ENCODE measurements at regions of chr15 and their contacts with region 1.

Region 1: GRCh38 chr15:96585484-96586386 is 255.2 kb downstream of the NR2F2 start:
- DNase-seq: no peak
- H3K4me3 Mint-ChIP-seq: no peak overlapping the region
- H3K27ac Mint-ChIP-seq: no peak overlapping the region
- H3K4me1 Mint-ChIP-seq: no peaks in the 10 kb centered on the region
- H3K27me3 Mint-ChIP-seq: no peaks in the 10 kb centered on the region

Region 2: DNA sequence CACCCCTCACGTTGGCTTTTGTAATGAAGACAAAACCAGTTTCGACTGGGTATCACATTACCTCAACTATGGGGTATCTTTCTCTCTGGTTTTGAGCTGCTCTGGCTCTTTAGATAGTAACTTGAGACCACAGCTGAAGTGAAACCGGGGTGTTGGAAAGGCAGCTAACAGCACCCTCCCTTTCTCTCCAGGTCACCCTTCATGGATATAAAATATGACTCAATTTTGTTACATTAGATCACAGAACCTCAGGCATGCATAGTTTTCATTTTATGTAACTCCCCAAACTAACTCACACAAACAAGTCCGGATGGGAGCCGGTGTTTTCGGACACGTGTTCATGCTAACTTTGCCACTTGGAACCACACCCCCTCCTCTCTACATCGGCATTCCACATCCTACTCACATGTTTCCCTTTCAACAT is 164.5 kb before region 1 on chr15:
- intact Hi-C with region 1: no loop called
- DNase-seq: no peak
- H3K4me3 Mint-ChIP-seq: no peak overlapping the region
- H3K27ac Mint-ChIP-seq: no peak overlapping the region
- H3K4me1 Mint-ChIP-seq: peaks cover 6% of the 10 kb centered on the region
- H3K27me3 Mint-ChIP-seq: peaks cover 46% of the 10 kb centered on the region

Region 3: GRCh38 chr15:96431787-96432186 is 153.9 kb before region 1 on chr15:
- intact Hi-C with region 1: loop called (anchors 10 kb)
- DNase-seq: no peak
- H3K4me3 Mint-ChIP-seq: no peak overlapping the region
- H3K27ac Mint-ChIP-seq: no peak overlapping the region
- H3K4me1 Mint-ChIP-seq: no peaks in the 10 kb centered on the region
- H3K27me3 Mint-ChIP-seq: peaks cover 5% of the 10 kb centered on the region